ENCODE measurements at regions of chr13 and their contacts with region 1.

Region 1: DNA sequence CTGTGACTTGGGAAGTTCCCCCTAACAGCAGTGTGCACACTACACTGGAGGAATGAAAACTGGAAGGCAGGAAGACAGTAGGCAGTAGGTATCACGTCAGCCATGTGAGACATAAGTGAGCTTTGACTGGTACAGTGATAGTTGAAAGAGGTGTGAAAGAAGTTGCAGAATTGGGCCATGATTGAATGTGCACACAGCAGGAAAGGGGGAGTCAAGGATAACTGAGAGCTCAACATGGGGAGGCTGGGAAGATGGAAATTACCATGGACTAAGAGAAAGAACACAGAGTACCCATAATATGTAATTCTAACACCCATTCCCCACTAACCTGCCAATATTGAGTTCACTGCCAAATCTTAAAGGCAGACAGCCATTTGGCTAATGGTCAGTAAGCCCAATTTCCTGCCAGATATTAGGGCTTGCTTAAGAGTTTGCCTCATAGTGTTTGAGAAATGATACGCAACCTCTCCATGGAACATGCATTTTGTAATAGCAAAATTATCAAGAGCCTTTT is 321.7 kb downstream of the DCT start:
- DNase-seq: no peak
- ATAC-seq: no peak
- H3K4me3 ChIP-seq: no peak overlapping the region
- H3K27ac ChIP-seq: no peak overlapping the region
- H3K4me1 ChIP-seq: peaks cover 6% of the 10 kb centered on the region; the same call in 1 of the 2 replicates
- H3K27me3 ChIP-seq: no peaks in the 10 kb centered on the region
- CTCF ChIP-seq: no peak
- EP300 ChIP-seq: no peak
- POLR2A ChIP-seq: no peak
- RAD21 ChIP-seq: no peak

Region 2: DNA sequence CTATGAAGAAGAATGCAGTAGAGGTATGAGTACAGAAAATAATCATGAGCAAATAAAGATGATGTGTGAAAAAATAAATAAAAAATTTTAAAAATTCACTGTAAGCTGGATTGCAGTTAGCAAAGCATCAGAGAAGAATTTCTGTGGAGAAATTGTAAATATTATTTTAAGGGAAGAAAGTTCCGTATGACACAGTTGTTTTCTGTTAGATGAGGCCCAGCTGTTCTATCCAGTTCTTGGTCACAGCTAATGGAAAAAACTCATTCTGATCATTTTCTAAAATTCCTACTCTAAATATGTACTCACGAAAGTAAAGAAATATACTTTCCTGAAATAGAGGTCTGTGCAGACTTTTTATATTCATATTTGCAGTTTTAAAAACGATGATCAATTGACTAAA is 257.0 kb before region 1 on chr13:
- CTCF ChIA-PET with region 1: no interaction called
- POLR2A ChIA-PET with region 1: no interaction called
- in situ Hi-C with region 1: no loop called
- intact Hi-C with region 1: loop called (anchors 5 kb)
- DNase-seq: no peak
- ATAC-seq: no peak
- H3K4me3 ChIP-seq: no peak overlapping the region
- H3K27ac ChIP-seq: no peak overlapping the region
- H3K4me1 ChIP-seq: no peaks in the 10 kb centered on the region
- H3K27me3 ChIP-seq: no peaks in the 10 kb centered on the region; a peak in 1 of 5 replicates
- CTCF ChIP-seq: no peak
- EP300 ChIP-seq: no peak
- POLR2A ChIP-seq: no peak
- RAD21 ChIP-seq: no peak

Region 3: GRCh38 chr13:93976528-93976927 is 181.2 kb before region 1 on chr13:
- CTCF ChIA-PET with region 1: no interaction called
- POLR2A ChIA-PET with region 1: no interaction called
- in situ Hi-C with region 1: no loop called
- intact Hi-C with region 1: no loop called
- DNase-seq: no peak
- ATAC-seq: no peak
- H3K4me3 ChIP-seq: no peak overlapping the region
- H3K27ac ChIP-seq: no peak overlapping the region
- H3K4me1 ChIP-seq: peaks cover 5% of the 10 kb centered on the region; the same call in 1 of the 2 replicates
- H3K27me3 ChIP-seq: no peaks in the 10 kb centered on the region
- CTCF ChIP-seq: no peak
- EP300 ChIP-seq: no peak
- POLR2A ChIP-seq: no peak
- RAD21 ChIP-seq: no peak